ENCODE measurements at regions of chr19 and their contacts with region 1.

Region 1: GRCh38 chr19:6516659-6517291 is 14.1 kb upstream of the TNFSF9 start:
- DNase-seq: peak; percentile 87 to 94
- ATAC-seq: peak; percentile 90 to 98 (median 94)
- H3K4me3 ChIP-seq: peak overlapping the region; percentile 48 to 73 (median 62)
- H3K27ac ChIP-seq: peak overlapping the region in 9 of 10 donors; percentile 33 to 77 (median 54)
- H3K4me1 ChIP-seq: peaks cover 0 to 31% (median 12%) of the 10 kb centered on the region in 9 donors
- H3K27me3 ChIP-seq: peaks cover 0 to 13% (median 9%) of the 10 kb centered on the region in 7 donors
- CTCF ChIP-seq: peak in 8 of 9 donors; percentile 87 to 98 (median 96)

Region 2: GRCh38 chr19:6862673-6863078 is 345.9 kb after region 1 on chr19:
- intact Hi-C with region 1: loop called (anchors 2 to 10 kb)
- DNase-seq: peak; percentile 75 to 78
- ATAC-seq: peak; percentile 81 to 97 (median 92)
- H3K4me3 ChIP-seq: peak overlapping the region in 8 of 10 donors; percentile 17 to 47 (median 35)
- H3K27ac ChIP-seq: peak overlapping the region in 1 of 10 donors; percentile 55
- H3K4me1 ChIP-seq: peaks cover 0 to 19% (median 0%) of the 10 kb centered on the region in 9 donors
- H3K27me3 ChIP-seq: peaks cover 0 to 13% (median 11%) of the 10 kb centered on the region in 7 donors
- CTCF ChIP-seq: peak; percentile 69 to 88 (median 83)